ENCODE measurements at regions of chr11 and their contacts with region 1.

Region 1: GRCh38 chr11:9351321-9351881 is 33.1 kb upstream of the IPO7 start:
- DNase-seq: no peak
- ATAC-seq: no peak
- H3K4me3 Mint-ChIP-seq: no peak overlapping the region
- H3K27ac Mint-ChIP-seq: no peak overlapping the region
- H3K4me1 Mint-ChIP-seq: peaks cover 8% of the 10 kb centered on the region
- H3K27me3 Mint-ChIP-seq: no peaks in the 10 kb centered on the region

Region 2: DNA sequence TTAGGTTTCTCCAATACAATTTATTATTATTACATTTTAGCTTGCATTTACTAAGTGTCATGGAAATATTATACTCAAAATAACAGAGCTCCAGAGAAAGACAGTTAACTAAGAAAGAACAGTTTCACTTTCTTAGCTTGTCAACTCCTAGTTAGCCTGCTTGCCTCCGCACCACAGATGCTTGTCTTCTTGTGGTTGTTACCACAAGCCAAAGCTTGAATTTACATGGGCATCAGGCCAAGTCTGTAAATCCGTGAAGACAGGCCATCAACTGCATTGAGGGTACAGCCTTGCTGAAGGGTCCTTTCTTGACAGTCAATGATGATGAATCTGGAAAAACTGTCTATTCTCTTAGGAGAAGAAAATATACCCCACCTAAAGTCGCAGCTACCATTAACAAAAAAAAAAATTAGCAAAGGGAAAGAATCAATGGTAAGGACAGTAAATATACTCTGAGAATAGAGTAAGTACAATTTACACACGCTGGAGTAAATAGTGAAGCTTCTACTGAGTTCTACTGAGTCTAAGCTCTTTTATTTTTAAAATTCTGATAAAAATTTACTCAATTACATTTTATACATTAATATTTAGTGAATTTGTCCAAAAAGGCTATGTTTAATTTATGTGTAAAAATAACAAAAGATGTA is 70.6 kb before region 1 on chr11:
- CTCF ChIA-PET with region 1: no interaction called
- POLR2A ChIA-PET with region 1: no interaction called
- intact Hi-C with region 1: no loop called
- DNase-seq: peak; percentile 73
- ATAC-seq: peak; percentile 95
- H3K4me3 Mint-ChIP-seq: no peak overlapping the region
- H3K27ac Mint-ChIP-seq: no peak overlapping the region
- H3K4me1 Mint-ChIP-seq: peaks cover 14% of the 10 kb centered on the region
- H3K27me3 Mint-ChIP-seq: no peaks in the 10 kb centered on the region

Region 3: GRCh38 chr11:9330387-9331384 is 20.7 kb before region 1 on chr11:
- CTCF ChIA-PET with region 1: no interaction called
- POLR2A ChIA-PET with region 1: no interaction called
- intact Hi-C with region 1: loop called in 1 of 2 experiments (anchors 2 kb)
- DNase-seq: no peak
- ATAC-seq: no peak
- H3K4me3 Mint-ChIP-seq: no peak overlapping the region
- H3K27ac Mint-ChIP-seq: no peak overlapping the region
- H3K4me1 Mint-ChIP-seq: peaks cover 3% of the 10 kb centered on the region
- H3K27me3 Mint-ChIP-seq: no peaks in the 10 kb centered on the region

Region 4: DNA sequence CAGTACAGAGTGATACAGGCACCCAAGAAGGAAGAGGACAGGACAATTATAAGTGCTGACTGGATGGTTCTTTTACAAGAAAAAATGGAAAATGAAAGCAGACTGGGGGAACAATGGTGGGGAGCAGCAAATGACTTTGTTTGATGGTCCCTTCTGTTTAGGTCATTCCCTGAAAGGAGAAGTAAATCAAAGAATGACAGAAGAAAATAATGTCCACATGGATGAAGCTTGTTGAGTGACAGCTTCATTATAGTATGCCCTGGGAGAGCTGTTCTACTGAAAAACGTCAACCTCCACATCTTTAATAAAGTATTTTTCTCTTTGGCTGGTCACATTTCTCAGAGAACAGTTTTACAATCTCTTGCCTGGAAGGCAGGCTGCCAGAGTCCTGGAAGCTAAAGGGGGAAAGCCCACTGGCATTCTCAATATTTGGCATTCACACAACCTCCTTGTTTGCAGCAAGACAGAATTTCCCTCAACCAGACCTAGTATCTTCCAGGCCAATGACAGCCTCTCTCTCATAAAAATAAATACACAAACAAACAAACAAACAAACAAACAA is 600.4 kb after region 1 on chr11:
- CTCF ChIA-PET with region 1: no interaction called
- POLR2A ChIA-PET with region 1: no interaction called
- intact Hi-C with region 1: no loop called
- DNase-seq: no peak
- ATAC-seq: no peak
- H3K4me3 Mint-ChIP-seq: no peak overlapping the region
- H3K27ac Mint-ChIP-seq: no peak overlapping the region
- H3K4me1 Mint-ChIP-seq: no peaks in the 10 kb centered on the region
- H3K27me3 Mint-ChIP-seq: no peaks in the 10 kb centered on the region